Naive thymus-derived CD4-positive, alpha-beta T cell (primary cell): ENCODE measurements at regions of chr19 and their contacts with region 1.

Region 1: DNA sequence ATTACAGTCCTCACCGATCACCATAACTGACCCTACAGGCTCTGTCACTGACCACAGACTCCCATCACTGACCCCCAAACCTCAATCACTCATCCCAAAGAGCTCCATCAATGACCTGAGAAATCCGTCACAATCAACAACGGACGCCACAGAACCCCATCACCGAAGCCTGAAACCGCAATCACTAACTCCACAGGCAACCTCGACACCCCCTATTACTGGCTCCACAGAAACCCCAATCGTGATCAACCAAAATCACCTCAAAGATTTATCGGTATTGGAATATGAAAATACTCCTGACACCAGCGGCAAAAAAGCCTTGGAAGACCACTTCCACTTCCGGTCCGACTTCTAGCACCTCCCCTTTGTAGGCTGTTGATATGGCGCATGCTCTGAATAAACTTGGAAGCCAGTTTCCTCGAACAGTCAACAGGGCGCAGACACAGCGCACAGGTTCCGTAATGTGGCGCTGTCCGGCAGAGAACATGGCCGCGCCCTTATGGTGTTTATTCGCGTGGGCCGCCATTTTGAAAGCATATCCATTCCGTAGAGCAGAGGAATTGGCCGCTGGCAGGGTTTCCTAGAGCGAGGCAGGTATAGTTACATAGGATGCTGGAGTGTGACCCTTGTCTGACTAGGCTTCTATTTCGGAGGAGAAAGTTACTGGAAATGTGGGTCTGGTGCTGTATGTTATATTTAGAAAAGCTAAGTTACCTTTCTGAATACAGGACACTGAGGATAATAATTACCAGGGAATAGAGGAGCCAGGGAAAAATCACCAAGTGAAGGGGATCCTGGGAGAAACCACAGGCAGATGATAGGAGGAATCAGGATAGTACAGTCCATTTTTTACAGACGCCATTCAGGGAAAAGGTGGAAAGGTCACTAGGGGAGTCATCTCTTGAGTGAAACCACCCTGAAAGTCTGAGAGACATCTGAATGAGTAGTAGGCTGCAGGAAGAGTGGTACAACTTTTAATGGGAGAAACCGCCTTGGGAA is at the start of gene ZNF585A:
- DNase-seq: peak; percentile 68 to 92 (median 88)
- ATAC-seq: peak; percentile 100
- H3K4me3 ChIP-seq: peak within 1 kb of the TSS; percentile 90
- H3K4me3 Mint-ChIP-seq: peak within 1 kb of the TSS in 3 of 10 donors; percentile 36 to 73 (median 39)
- H3K27ac ChIP-seq: peak within 1 kb of the TSS; percentile 84
- H3K27ac Mint-ChIP-seq: no peak within 1 kb of the TSS
- H3K4me1 ChIP-seq: no peaks in the 10 kb centered on the region
- H3K4me1 Mint-ChIP-seq: peaks cover 0 to 16% (median 4%) of the 10 kb centered on the region in 7 donors
- H3K27me3 ChIP-seq: no peaks in the 10 kb centered on the region
- H3K27me3 Mint-ChIP-seq: no peaks in the 10 kb centered on the region
- total RNA-seq, gene ZNF585A: 3.5 to 24.3 (median 7.2) TPM

Region 2: DNA sequence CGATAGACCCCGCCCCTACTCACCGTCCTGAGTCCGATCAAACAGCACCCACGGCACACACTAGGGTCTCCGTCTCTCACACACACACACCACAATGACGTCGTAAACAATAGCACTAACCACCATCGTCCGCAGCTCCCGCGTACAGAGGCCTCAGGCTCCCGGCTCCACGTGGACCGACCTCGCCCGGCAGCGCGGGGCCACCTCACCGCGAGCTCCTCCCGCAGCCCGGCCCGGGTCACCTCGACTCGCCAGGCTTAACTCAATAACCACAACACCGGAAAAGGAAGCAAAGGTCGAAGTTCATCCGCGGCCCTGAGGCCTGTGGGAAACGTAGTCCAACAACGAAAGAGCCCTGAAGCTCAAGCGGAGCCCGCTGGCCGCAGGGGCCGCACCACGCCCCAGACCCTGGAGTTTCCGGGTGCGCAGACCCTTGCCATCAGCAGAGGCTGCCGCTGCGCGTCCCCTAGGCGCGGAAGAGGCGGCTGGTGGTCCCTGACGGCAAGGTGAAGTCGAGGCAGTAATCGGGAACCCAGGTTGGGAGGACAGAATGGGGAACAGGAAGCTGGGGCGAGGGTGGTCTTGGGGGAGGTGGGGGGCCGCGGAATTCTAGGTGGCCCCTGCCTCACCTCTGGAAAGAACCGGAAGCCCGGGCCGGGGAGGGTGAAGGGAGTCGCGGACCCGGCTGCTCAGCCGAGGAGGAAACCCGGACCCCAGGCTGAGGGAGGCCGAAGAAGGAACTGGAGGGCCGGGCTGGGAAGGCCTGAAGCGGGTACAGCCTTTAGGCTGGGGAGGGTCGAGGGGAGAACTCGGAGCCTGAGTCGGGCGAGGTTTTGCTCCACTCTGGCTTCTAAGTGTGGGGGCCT is 599.4 kb before region 1 on chr19 and contains the start of gene ZNF529:
- CTCF ChIA-PET with region 1: no interaction called
- POLR2A ChIA-PET with region 1: no interaction called
- intact Hi-C with region 1: loop called in 1 of 2 experiments (anchors 1 kb)
- DNase-seq: peak; percentile 67 to 95 (median 85)
- ATAC-seq: peak; percentile 95
- H3K4me3 ChIP-seq: peak within 1 kb of the TSS; percentile 95
- H3K4me3 Mint-ChIP-seq: peak within 1 kb of the TSS; percentile 80 to 100 (median 93)
- H3K27ac ChIP-seq: peak within 1 kb of the TSS; percentile 98
- H3K27ac Mint-ChIP-seq: peak within 1 kb of the TSS; percentile 94 to 100 (median 98)
- H3K4me1 ChIP-seq: peaks cover 0 to 15% of the 10 kb centered on the region in 2 donors
- H3K4me1 Mint-ChIP-seq: peaks cover 23 to 46% (median 40%) of the 10 kb centered on the region in 7 donors
- H3K27me3 ChIP-seq: no peaks in the 10 kb centered on the region
- H3K27me3 Mint-ChIP-seq: no peaks in the 10 kb centered on the region
- total RNA-seq, gene ZNF529: 22.6 to 37.8 (median 33.8) TPM

Region 3: GRCh38 chr19:36837906-36838783 is 334.5 kb before region 1 on chr19 and contains the start of gene ZNF790:
- CTCF ChIA-PET with region 1: no interaction called
- POLR2A ChIA-PET with region 1: interaction called, 3 read pairs
- intact Hi-C with region 1: loop called in 1 of 2 experiments (anchors 1 kb)
- DNase-seq: peak; percentile 68 to 91 (median 85)
- ATAC-seq: peak; percentile 95
- H3K4me3 ChIP-seq: peak within 1 kb of the TSS; percentile 92
- H3K4me3 Mint-ChIP-seq: peak within 1 kb of the TSS in 1 of 10 donors; percentile 22
- H3K27ac ChIP-seq: peak within 1 kb of the TSS; percentile 92
- H3K27ac Mint-ChIP-seq: peak within 1 kb of the TSS in 5 of 9 donors; percentile 39 to 65 (median 51)
- H3K4me1 ChIP-seq: peaks cover 6 to 11% of the 10 kb centered on the region in 2 donors
- H3K4me1 Mint-ChIP-seq: peaks cover 0 to 21% (median 14%) of the 10 kb centered on the region in 7 donors
- H3K27me3 ChIP-seq: no peaks in the 10 kb centered on the region
- H3K27me3 Mint-ChIP-seq: no peaks in the 10 kb centered on the region
- total RNA-seq, gene ZNF790: 2.6 to 14.4 (median 7.3) TPM

Region 4: GRCh38 chr19:37077934-37078725 is 94.5 kb before region 1 on chr19 and contains the start of gene ZNF420:
- CTCF ChIA-PET with region 1: no interaction called
- POLR2A ChIA-PET with region 1: no interaction called
- intact Hi-C with region 1: loop called (anchors 1 to 2 kb)
- DNase-seq: peak; percentile 64 to 89 (median 84)
- ATAC-seq: peak; percentile 98
- H3K4me3 ChIP-seq: peak within 1 kb of the TSS; percentile 92
- H3K4me3 Mint-ChIP-seq: peak within 1 kb of the TSS; percentile 90 to 100 (median 96)
- H3K27ac ChIP-seq: peak within 1 kb of the TSS; percentile 82
- H3K27ac Mint-ChIP-seq: peak within 1 kb of the TSS; percentile 70 to 99 (median 94)
- H3K4me1 ChIP-seq: peaks cover 11 to 19% of the 10 kb centered on the region in 2 donors
- H3K4me1 Mint-ChIP-seq: peaks cover 16 to 43% (median 34%) of the 10 kb centered on the region in 7 donors
- H3K27me3 ChIP-seq: no peaks in the 10 kb centered on the region
- H3K27me3 Mint-ChIP-seq: no peaks in the 10 kb centered on the region
- total RNA-seq, gene ZNF420: 10.8 to 34.9 (median 15.9) TPM

Region 5: GRCh38 chr19:37506387-37507166 is 333.9 kb after region 1 on chr19 and contains the start of gene ZNF793:
- CTCF ChIA-PET with region 1: no interaction called
- POLR2A ChIA-PET with region 1: no interaction called
- intact Hi-C with region 1: loop called in 1 of 2 experiments (anchors 1 kb)
- DNase-seq: peak; percentile 33 to 88 (median 83)
- ATAC-seq: peak; percentile 90
- H3K4me3 ChIP-seq: peak within 1 kb of the TSS; percentile 83
- H3K4me3 Mint-ChIP-seq: no peak within 1 kb of the TSS
- H3K27ac ChIP-seq: peak within 1 kb of the TSS; percentile 90
- H3K27ac Mint-ChIP-seq: no peak within 1 kb of the TSS
- H3K4me1 ChIP-seq: peaks cover 0 to 14% of the 10 kb centered on the region in 2 donors
- H3K4me1 Mint-ChIP-seq: peaks cover 0 to 2% (median 0%) of the 10 kb centered on the region in 7 donors
- H3K27me3 ChIP-seq: no peaks in the 10 kb centered on the region
- H3K27me3 Mint-ChIP-seq: peaks cover 0 to 5% (median 0%) of the 10 kb centered on the region in 5 donors
- total RNA-seq, gene ZNF793: 1.1 to 11.7 (median 6.0) TPM